Posterior cingulate gyrus (tissue), 11 donors: ENCODE measurements at regions of chr3 and their contacts with region 1.

Region 1: DNA sequence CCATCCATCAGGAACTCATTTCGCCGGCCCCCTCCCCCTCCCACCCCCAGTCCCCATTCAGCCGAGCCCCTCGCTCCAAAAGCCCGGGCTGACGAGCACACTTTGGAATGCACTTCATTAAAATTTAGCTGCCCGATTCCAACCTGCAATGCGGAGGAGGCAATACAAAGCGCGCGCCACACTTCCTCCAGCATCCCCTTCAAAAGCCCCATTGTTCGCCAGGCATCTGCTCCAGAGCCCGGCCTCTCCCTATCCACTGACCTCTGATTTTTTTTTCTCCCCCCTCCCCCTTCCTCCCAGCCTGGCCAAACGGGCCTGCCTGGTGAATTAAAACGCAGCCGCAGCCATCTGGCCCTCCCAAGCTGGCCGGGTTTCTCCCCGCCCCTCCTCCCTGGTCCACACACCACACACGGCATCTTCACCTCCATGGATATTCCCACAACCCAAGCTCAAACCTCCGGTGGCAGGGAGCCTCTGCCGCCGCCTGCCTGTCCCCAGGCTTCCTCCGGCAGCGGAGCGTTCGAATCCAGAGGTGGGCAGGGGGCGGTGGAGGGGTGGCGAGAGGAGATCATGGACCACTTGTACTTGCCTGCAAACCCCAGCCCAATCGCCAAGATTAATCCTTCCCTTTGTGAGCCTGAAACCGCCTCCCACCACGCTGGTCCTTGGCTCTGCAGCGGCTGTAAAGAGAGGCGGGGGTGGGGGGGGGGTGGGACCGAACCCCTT is 441.3 kb downstream of the MAGI1 start:
- DNase-seq: peak; percentile 47 to 95 (median 68)

Region 2: GRCh38 chr3:65439641-65440284 is 157.6 kb before region 1 on chr3:
- intact Hi-C with region 1: no loop called
- DNase-seq: peak in 9 of 10 donors; percentile 41 to 95 (median 68)

Region 3: GRCh38 chr3:65483480-65483879 is 113.9 kb before region 1 on chr3:
- intact Hi-C with region 1: loop called (anchors 10 kb)
- DNase-seq: peak in 9 of 10 donors; percentile 44 to 92 (median 65)

Region 4: GRCh38 chr3:65617197-65617596 is 19.8 kb after region 1 on chr3:
- intact Hi-C with region 1: no loop called
- DNase-seq: no peak

Region 5: DNA sequence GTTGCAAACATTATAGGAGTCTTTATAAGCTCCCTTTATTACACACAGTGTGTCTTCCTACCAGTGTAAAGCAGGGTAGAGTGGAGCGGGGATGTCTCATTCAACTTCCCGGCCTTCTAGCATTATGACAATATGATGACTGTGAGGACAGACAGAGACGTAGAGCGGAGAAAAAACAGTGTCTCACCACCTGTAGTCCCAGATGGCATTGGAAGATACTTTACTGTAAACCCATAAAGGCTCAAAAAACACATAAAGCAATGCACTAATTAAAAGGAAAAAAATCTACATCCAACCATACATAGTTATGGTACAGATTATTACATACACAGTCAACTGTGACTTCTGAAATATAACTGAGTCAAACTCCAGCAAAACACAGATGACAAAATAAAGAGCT is 57.7 kb after region 1 on chr3:
- intact Hi-C with region 1: no loop called
- DNase-seq: no peak

Region 6: DNA sequence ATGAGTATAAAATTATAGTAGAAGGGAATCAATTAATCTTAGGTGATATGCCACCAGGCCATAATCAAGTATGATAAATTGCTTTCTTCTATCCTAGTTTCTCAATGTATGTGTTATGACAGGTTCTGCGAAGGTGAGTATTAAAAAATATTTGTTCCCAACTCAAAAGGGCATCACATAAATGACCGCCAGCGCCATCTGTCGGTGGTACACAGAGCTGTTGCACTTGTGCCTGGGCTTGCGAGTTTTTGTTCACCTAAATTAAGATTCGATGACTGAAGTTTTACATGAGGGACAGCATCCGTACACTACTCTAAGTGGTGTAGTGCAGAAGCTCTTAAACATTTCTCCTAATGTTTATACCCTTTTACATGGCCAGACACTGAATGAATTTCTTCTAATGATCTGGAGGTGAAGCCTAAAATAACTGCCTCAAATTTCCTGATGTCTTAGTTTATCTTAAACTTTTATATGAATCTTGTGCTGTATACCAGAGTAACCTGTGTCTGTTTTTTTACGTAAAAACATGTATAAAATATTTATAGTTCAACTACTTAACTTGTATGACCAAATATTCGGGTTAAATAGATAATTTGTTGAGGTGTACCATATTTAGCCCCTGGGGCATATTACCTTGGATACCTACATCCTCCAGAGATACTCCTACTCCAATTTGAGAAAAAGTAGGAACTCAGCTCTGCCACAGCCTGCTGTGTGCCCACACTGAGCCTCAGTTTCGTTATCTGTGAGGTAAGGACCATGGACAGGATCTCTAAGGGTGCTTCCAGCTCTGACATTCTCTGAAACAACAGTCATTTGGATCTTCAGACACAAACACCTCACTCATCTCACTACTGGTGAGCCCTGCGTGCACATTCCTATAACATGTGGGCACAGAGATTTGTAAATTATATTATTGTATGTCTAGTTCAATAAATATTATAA is 75.8 kb after region 1 on chr3:
- intact Hi-C with region 1: loop called (anchors 5 kb)
- DNase-seq: peak; percentile 22 to 94 (median 74)

Region 7: DNA sequence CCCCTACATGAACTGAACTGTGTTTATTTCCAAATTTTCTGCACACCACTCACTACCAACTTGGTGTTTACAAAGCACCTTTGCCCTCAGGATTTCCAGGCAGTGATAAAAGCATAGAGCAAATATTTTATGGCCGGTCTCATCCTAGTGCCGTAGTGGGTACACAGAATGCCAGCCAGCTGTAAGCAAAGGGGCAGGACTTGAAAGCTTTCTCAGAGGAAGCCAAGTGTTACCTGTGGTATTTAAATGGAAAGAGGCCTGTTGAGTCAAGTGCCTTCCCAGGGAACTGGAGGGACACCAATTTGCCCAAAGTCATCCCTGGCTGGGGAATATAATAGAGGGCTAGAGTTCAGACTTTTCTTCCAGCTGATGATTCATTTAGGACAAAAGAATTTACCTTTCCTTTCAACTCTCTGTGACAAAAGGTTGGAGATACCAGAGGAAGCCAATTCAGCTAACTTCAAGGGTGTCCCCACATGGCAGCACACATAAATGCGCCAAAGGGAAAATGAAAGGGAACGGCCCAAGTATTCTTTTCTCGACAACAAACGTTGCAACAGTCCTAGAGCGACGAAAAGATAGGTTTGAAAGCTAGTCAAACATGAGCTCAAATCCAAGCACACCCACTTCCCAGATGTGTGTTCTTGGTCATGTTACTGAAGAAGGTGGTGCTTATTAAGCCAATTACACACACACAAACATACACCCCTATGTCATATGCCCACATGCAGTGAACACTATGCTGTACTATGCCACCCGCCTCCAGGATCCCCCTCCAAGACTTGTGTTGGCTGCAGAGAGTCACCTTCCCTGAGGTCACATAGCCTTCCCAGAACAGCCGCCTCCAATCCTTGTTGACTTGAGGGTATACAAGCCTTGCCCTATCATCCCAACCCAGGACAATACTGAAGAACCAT is 413.6 kb after region 1 on chr3:
- intact Hi-C with region 1: no loop called
- DNase-seq: no peak